CD8-positive, alpha-beta T cell (primary cell): ENCODE measurements at regions of chr1 and their contacts with region 1.

Region 1: DNA sequence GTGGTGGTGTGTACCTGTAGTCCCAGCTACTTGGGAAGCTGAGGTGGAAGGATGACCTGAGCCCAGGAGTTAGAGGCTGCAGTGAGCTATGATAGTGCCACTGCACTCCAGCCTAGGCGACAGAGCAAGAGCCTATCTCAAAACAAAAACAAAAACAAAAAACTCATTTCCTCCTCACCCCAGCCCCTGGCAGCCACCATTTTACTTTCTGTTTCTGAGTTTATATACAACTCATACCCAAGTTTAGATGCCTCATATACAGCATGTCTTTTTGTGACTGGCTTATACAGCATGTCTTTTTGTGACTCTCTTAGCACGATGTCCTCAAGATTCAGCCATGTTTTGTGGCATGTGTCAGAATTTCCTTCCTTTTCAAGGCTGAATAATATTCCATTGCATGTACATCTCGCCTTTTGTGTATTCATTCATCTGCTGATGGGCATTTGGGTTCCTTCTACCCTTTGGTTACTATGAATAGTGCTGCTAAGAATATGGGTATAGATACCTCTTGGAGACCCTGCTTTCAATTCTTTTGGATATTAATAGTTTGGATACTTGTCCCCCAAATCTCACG is 14.7 kb downstream of the COA7 start:
- DNase-seq: no peak
- ATAC-seq: no peak
- H3K4me3 ChIP-seq: no peak overlapping the region
- H3K4me3 Mint-ChIP-seq: no peak overlapping the region
- H3K27ac ChIP-seq: no peak overlapping the region
- H3K27ac Mint-ChIP-seq: peak overlapping the region; percentile 45
- H3K4me1 ChIP-seq: peaks cover 6% of the 10 kb centered on the region
- H3K4me1 Mint-ChIP-seq: peaks cover 12% of the 10 kb centered on the region
- H3K27me3 ChIP-seq: no peaks in the 10 kb centered on the region
- H3K27me3 Mint-ChIP-seq: no peaks in the 10 kb centered on the region
- CTCF ChIP-seq: no peak

Region 2: GRCh38 chr1:51897699-51898031 is 785.8 kb before region 1 on chr1:
- CTCF ChIA-PET with region 1: no interaction called
- POLR2A ChIA-PET with region 1: no interaction called
- intact Hi-C with region 1: loop called in 1 of 2 experiments (anchors 2 kb)
- DNase-seq: no peak
- ATAC-seq: no peak
- H3K4me3 ChIP-seq: no peak overlapping the region
- H3K4me3 Mint-ChIP-seq: no peak overlapping the region
- H3K27ac ChIP-seq: no peak overlapping the region
- H3K27ac Mint-ChIP-seq: no peak overlapping the region
- H3K4me1 ChIP-seq: no peaks in the 10 kb centered on the region
- H3K4me1 Mint-ChIP-seq: no peaks in the 10 kb centered on the region
- H3K27me3 ChIP-seq: peaks cover 0 to 2% of the 10 kb centered on the region in 2 experiments
- H3K27me3 Mint-ChIP-seq: peaks cover 49% of the 10 kb centered on the region
- CTCF ChIP-seq: no peak

Region 3: DNA sequence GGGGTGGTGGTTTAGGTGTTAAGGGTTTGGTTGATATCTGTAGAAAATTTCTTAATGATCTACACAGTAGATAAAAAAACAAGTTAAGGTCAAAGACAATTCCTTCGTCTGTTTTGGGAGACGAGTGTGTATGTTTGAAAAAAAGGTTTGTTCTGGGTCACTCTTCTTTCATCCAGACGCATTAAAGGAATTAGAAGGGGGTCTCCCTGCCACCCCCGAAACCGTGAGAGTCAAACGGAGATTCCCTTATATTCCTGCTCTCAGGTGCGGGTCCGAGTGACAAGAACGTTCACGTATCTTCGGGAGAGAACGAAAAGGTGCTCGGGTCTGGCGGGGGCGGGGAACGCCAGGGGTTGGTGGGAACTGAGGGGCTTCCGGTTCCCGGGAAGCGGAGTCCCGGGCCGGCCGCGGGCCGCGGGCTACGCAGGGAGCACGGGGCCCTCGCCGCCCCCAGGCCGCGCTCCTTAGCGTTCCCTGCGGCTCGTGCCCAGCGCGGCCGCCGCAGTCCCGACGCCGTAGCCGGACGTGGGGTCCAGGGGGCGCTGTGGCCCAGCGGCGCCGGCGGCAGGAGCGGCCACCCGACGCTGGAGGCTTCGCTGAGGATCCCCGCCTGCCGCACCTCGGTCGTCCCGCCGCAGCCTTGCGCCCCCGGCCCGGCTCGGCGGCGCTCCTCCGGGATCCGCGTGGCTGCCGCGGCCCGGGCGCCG is 541.8 kb before region 1 on chr1 and contains the start of gene ZFYVE9:
- CTCF ChIA-PET with region 1: no interaction called
- POLR2A ChIA-PET with region 1: no interaction called
- intact Hi-C with region 1: loop called (anchors 5 kb)
- DNase-seq: peak; percentile 41 to 87 (median 71)
- ATAC-seq: peak; percentile 78
- H3K4me3 ChIP-seq: peak within 1 kb of the TSS; percentile 52 to 66
- H3K4me3 Mint-ChIP-seq: peak within 1 kb of the TSS; percentile 92
- H3K27ac ChIP-seq: peak within 1 kb of the TSS; percentile 33 to 49
- H3K27ac Mint-ChIP-seq: peak within 1 kb of the TSS; percentile 91
- H3K4me1 ChIP-seq: peaks cover 21% of the 10 kb centered on the region
- H3K4me1 Mint-ChIP-seq: peaks cover 41% of the 10 kb centered on the region
- H3K27me3 ChIP-seq: peaks cover 0 to 3% of the 10 kb centered on the region in 2 experiments
- H3K27me3 Mint-ChIP-seq: no peaks in the 10 kb centered on the region
- CTCF ChIP-seq: peak; percentile 59
- total RNA-seq, gene ZFYVE9: 5.9 to 6.3 TPM

Region 4: DNA sequence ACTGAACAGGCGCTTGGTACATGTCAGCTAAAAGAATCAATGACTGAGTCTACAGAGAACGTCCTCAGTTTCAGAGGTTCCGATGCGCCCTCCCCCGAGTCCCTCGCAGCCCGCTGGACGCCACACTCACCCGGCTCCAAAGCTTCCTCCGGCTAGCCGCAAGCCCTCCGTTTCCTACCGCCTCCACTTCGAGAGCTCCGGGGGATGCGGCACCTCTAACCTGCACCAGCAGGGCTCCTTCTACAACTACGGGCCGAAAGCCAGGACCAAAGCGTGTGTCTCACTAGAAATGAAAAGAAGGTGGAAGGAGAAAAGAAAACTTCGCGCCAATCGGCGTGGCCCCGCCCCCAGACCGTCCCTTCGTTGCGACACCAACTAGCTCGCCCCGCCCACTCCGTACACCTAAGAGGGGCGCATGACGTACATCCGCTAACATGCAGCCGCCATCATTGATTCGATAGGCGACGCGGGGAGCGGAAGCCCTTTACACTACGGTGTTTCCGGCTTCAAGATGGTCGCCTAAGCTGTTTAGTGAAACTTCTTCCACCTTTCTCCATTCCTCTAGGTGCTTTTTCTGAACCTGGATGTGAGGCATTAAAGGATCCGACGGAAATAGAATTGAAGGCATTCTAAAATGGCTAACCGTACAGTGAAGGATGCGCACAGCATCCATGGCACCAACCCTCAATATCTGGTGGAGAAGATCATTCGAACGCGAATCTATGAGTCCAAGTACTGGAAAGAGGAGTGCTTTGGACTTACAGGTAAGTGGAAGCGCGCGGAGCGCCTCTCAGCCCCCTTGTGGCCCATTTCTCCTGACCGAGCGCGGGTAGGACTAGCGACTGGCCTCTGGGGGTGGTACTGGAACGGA is 279.1 kb before region 1 on chr1 and contains the starts of genes ORC1 and PRPF38A:
- CTCF ChIA-PET with region 1: interaction called, 12 read pairs
- POLR2A ChIA-PET with region 1: no interaction called
- intact Hi-C with region 1: loop called (anchors 1 to 5 kb)
- DNase-seq: peak; percentile 94 to 99 (median 98)
- ATAC-seq: peak; percentile 92
- H3K4me3 ChIP-seq: peak within 1 kb of the TSS; percentile 87 to 92
- H3K4me3 Mint-ChIP-seq: peak within 1 kb of the TSS; percentile 99
- H3K27ac ChIP-seq: peak within 1 kb of the TSS; percentile 96
- H3K27ac Mint-ChIP-seq: peak within 1 kb of the TSS; percentile 98
- H3K4me1 ChIP-seq: peaks cover 26% of the 10 kb centered on the region
- H3K4me1 Mint-ChIP-seq: peaks cover 42% of the 10 kb centered on the region
- H3K27me3 ChIP-seq: no peaks in the 10 kb centered on the region
- H3K27me3 Mint-ChIP-seq: no peaks in the 10 kb centered on the region
- CTCF ChIP-seq: no peak
- total RNA-seq, gene ORC1: 1.2 to 1.3 TPM
- total RNA-seq, gene PRPF38A: 52.2 to 62.0 TPM

Region 5: DNA sequence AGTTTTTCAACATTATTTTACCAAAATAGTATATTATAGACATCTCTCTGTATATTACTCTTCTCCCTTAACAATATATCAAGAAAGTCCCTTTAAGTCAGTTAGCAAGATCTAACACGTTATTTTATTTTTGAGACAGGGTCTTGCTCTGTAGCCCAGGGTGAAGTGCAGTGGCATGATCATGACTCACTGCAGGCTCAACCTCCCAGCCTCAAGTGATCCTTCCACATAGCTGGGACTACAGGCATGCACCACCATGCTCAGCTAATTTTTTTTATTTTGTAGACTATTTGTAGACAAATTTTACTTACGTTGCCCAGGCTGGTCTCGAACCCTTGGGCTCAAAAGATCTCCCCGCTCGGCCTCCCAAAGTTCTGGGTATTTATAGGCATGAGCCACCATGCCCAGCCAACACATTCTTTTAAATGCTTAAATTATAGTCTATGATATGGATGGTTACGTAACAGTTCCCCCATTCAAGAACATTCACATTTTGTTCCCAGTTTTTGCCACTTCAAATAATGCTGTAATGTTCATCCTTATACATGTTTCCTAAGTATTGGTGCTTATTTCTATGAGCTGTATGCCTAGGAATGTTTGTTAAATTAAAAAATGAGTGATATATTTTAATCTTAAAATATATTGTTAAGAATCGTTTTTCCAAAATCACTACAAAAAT is 201.0 kb before region 1 on chr1:
- CTCF ChIA-PET with region 1: interaction called, 3 read pairs
- POLR2A ChIA-PET with region 1: no interaction called
- intact Hi-C with region 1: loop called in 1 of 2 experiments (anchors 10 kb)
- DNase-seq: no peak
- ATAC-seq: no peak
- H3K4me3 ChIP-seq: no peak overlapping the region
- H3K4me3 Mint-ChIP-seq: no peak overlapping the region
- H3K27ac ChIP-seq: no peak overlapping the region
- H3K27ac Mint-ChIP-seq: no peak overlapping the region
- H3K4me1 ChIP-seq: no peaks in the 10 kb centered on the region
- H3K4me1 Mint-ChIP-seq: no peaks in the 10 kb centered on the region
- H3K27me3 ChIP-seq: no peaks in the 10 kb centered on the region
- H3K27me3 Mint-ChIP-seq: no peaks in the 10 kb centered on the region
- CTCF ChIP-seq: no peak

Region 6: DNA sequence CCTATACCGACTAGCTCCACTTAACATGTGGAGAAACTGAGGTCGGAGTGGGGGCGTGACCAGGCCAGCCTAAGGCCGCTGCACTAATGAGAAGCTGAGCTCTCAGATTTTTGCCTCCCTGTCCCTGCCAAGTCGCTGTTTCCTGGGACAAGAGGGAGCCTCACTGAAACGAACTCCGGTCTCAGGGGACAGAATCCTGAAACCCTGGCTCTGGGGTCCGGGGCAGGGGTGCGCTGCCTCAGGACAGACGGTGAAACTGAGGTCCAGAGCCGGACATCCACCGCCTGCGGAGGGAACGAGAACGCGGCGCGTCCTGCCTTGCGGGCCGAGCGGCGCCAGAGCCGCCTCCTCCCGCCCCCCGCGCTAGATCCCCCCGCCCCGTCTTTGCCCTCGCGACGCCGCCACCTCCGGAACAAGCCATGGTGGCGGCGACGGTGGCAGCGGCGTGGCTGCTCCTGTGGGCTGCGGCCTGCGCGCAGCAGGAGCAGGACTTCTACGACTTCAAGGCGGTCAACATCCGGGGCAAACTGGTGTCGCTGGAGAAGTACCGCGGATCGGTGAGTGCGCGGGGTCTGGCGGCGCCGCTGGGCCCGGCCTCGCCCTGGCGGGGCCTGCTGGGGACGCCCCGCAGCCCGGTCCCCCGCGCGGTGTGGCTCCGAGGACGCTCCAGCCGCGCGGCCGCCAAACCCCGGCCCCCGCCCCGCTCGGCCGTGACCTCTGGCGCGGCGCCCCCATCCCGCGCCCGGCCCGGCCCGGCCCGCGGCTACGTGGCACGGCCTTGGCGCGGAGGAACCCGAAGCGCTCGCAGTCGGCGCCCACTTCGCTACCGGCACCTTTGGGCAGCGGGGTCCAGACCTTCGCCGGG is 81.2 kb before region 1 on chr1 and contains the start of gene GPX7:
- CTCF ChIA-PET with region 1: interaction called, 3 read pairs
- POLR2A ChIA-PET with region 1: interaction called, 5 read pairs
- intact Hi-C with region 1: loop called (anchors 2 to 10 kb)
- DNase-seq: peak; percentile 21 to 81 (median 66)
- ATAC-seq: peak; percentile 82
- H3K4me3 ChIP-seq: peak within 1 kb of the TSS; percentile 59 to 64
- H3K4me3 Mint-ChIP-seq: peak within 1 kb of the TSS; percentile 91
- H3K27ac ChIP-seq: peak within 1 kb of the TSS; percentile 71 to 73
- H3K27ac Mint-ChIP-seq: peak within 1 kb of the TSS; percentile 96
- H3K4me1 ChIP-seq: peaks cover 30% of the 10 kb centered on the region
- H3K4me1 Mint-ChIP-seq: peaks cover 52% of the 10 kb centered on the region
- H3K27me3 ChIP-seq: no peaks in the 10 kb centered on the region
- H3K27me3 Mint-ChIP-seq: no peaks in the 10 kb centered on the region
- CTCF ChIP-seq: no peak
- total RNA-seq, gene GPX7: 10.7 to 11.1 TPM